WTC11 (cell line): ENCODE measurements at regions of chr3 and their contacts with region 1.

Region 1: GRCh38 chr3:142828703-142829305 is 60.1 kb downstream of the PCOLCE2 start:
- DNase-seq: peak; percentile 88
- ATAC-seq: peak; percentile 98
- H3K4me3 Mint-ChIP-seq: no peak overlapping the region
- H3K27ac Mint-ChIP-seq: no peak overlapping the region
- H3K4me1 Mint-ChIP-seq: no peaks in the 10 kb centered on the region
- H3K27me3 Mint-ChIP-seq: no peaks in the 10 kb centered on the region
- CTCF ChIP-seq: peak; percentile 73

Region 2: DNA sequence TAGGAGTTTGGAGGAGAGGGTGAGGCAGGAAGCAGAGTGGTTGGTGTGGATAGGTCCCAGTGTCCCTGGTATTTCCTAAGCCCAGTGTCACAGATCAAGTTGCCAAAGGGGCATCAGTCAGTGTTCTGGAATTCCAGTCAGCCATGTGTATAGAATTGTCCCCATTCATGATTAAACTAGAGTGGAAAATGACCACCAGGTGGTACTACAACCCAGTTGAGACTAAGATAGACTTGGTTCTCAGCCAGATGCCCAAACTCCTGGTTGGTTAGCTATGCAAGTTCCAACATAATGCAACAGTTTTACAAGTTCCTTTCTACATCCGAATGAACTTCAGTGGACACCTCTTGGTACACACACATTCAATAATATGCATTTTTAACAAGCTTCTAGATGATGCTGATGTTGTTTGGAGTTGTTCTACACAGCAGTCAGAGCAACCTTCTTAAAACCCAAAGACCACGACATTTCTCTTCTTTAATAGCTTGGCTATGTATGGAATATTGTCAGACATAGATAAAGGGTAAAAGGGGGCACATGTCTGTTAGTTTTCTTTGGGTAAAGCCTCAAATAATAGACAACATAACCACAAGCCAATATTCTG is 241.9 kb before region 1 on chr3:
- CTCF ChIA-PET with region 1: interaction called, 11 read pairs
- POLR2A ChIA-PET with region 1: no interaction called
- DNase-seq: no peak
- ATAC-seq: peak; percentile 96
- H3K4me3 Mint-ChIP-seq: no peak overlapping the region
- H3K27ac Mint-ChIP-seq: no peak overlapping the region
- H3K4me1 Mint-ChIP-seq: no peaks in the 10 kb centered on the region
- H3K27me3 Mint-ChIP-seq: no peaks in the 10 kb centered on the region
- CTCF ChIP-seq: peak; percentile 46; the same call in 1 of the 2 replicates

Region 3: DNA sequence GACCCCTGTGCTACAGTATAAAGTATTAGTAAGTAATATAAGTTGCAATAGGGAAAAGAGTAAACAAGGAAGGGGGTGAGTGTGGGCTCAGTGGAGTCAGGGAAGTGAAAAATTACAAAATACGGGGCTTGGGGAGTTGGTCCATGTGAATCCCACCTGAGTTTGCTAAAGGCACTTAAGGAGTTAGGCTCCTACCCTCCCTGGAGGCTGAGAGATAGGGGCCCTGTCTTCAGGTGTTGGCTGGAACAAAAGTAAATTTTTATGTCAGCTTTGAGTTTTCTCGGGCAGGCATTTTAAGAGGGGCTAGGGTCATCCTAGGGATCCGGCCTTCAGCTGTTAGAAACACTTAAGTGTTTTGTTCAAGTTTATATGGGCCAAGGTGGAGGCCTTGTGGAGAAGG is 96.7 kb before region 1 on chr3:
- CTCF ChIA-PET with region 1: no interaction called
- POLR2A ChIA-PET with region 1: no interaction called
- DNase-seq: no peak
- ATAC-seq: peak; percentile 58
- H3K4me3 Mint-ChIP-seq: no peak overlapping the region
- H3K27ac Mint-ChIP-seq: peak overlapping the region; percentile 29; the same call in 1 of the 2 replicates
- H3K4me1 Mint-ChIP-seq: peaks cover 18% of the 10 kb centered on the region
- H3K27me3 Mint-ChIP-seq: no peaks in the 10 kb centered on the region
- CTCF ChIP-seq: no peak

Region 4: DNA sequence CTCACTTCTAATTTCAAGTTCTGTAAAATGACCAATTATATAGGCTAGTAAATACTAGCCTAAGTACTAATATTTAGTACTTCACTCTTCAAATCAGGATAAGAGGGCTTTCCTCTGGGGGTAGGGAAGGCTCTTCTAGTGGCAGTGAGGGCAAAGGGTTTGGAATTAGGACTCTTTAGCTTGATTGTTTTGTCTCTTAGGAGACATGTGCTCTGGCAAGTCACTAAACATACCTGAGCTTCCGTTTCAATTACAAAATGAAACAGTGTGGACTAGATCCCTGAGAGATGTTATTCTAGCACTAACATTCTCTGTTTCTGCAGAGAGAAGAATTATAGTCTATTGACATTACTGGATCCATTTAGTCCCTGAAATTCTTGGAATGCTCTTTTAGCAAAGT is 11.4 kb before region 1 on chr3:
- CTCF ChIA-PET with region 1: interaction called, 10 read pairs
- POLR2A ChIA-PET with region 1: no interaction called
- DNase-seq: no peak
- ATAC-seq: no peak
- H3K4me3 Mint-ChIP-seq: no peak overlapping the region
- H3K27ac Mint-ChIP-seq: no peak overlapping the region
- H3K4me1 Mint-ChIP-seq: no peaks in the 10 kb centered on the region
- H3K27me3 Mint-ChIP-seq: no peaks in the 10 kb centered on the region; the same call in 1 of the 2 replicates
- CTCF ChIP-seq: no peak

Region 5: DNA sequence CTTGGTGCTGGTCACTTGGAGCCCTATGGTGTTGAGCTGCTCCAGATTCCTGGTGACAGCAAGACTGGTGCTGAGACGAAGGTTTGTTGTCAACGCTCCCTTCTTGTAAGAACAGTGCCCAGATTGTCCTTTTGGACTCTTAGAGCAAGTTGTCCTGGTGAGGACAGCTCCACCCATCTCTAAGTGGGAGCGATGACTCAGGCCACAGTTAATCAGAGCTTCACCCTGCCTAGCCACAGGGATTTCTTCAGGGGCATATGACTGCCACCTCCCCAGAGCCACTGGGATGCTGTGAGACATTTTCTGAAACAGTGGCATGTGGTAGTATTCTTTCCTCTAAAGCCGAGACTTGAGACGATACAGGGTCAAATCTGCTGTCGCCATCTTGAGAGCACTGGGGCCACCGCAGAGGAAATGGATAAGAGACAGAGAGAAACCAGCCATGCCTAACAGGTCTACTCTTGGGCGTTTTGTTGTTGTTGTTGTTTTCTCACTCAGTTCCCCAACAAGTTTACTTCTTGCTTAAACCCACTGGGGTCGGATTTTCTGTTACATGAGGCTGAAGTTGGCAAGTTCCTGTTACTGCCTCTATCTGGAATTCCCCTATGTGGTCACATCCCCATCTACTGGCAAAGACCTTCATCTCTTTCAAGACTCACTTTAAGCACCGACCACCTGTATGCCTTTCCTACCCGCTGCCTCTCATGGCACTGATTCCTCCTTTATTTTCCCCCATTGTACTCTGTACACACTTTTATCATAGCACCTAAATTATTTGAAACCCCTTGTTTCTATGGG is 76.0 kb after region 1 on chr3:
- CTCF ChIA-PET with region 1: interaction called, 69 read pairs
- POLR2A ChIA-PET with region 1: no interaction called
- DNase-seq: peak; percentile 14
- ATAC-seq: peak; percentile 96
- H3K4me3 Mint-ChIP-seq: no peak overlapping the region
- H3K27ac Mint-ChIP-seq: no peak overlapping the region
- H3K4me1 Mint-ChIP-seq: no peaks in the 10 kb centered on the region
- H3K27me3 Mint-ChIP-seq: no peaks in the 10 kb centered on the region
- CTCF ChIP-seq: no peak

Region 6: GRCh38 chr3:142929109-142929508 is 100.3 kb after region 1 on chr3:
- CTCF ChIA-PET with region 1: interaction called, 15 read pairs
- POLR2A ChIA-PET with region 1: no interaction called
- DNase-seq: peak; percentile 71
- ATAC-seq: peak; percentile 72
- H3K4me3 Mint-ChIP-seq: no peak overlapping the region
- H3K27ac Mint-ChIP-seq: no peak overlapping the region
- H3K4me1 Mint-ChIP-seq: peaks cover 8% of the 10 kb centered on the region
- H3K27me3 Mint-ChIP-seq: no peaks in the 10 kb centered on the region
- CTCF ChIP-seq: peak; percentile 53

Region 7: DNA sequence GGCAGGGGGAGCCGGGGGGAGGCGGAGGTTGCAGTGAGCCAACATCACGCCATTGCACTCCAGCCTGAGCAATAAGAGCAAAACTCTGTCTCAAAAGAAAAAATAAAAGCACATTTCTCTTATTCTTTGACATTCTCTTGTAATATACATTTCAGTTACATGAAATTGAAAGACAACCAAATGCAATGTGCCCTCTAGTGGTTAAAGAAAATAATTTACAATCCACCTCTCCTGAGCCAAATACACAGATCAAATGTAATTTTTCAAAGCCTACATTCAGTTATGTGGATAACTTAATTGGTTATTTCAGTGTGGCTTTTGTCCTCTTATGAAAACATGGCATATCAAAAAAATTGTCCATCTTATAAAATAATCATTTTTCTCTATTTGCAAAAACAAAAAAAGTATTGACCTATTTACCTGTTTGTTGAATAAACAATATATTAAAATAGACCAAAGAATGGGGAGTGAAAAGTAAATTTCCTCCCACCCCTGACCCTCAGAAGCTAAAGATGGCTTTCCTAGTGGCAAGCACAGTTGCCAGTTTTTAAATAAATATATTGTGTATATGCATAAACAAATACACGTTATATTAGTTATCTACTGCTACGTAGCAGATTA is 158.4 kb after region 1 on chr3:
- CTCF ChIA-PET with region 1: interaction called, 26 read pairs
- POLR2A ChIA-PET with region 1: no interaction called
- DNase-seq: no peak
- ATAC-seq: no peak
- H3K4me3 Mint-ChIP-seq: no peak overlapping the region
- H3K27ac Mint-ChIP-seq: no peak overlapping the region
- H3K4me1 Mint-ChIP-seq: peaks cover 11% of the 10 kb centered on the region
- H3K27me3 Mint-ChIP-seq: no peaks in the 10 kb centered on the region
- CTCF ChIP-seq: peak; percentile 67

Region 8: GRCh38 chr3:143001369-143002082 is 172.7 kb after region 1 on chr3 and contains the start of gene U2SURP:
- CTCF ChIA-PET with region 1: interaction called, 12 read pairs
- POLR2A ChIA-PET with region 1: no interaction called
- DNase-seq: peak; percentile 95
- ATAC-seq: peak; percentile 85
- H3K4me3 Mint-ChIP-seq: peak within 1 kb of the TSS; percentile 96
- H3K27ac Mint-ChIP-seq: peak within 1 kb of the TSS; percentile 98
- H3K4me1 Mint-ChIP-seq: peaks cover 34% of the 10 kb centered on the region
- H3K27me3 Mint-ChIP-seq: no peaks in the 10 kb centered on the region
- CTCF ChIP-seq: no peak
- total RNA-seq, gene U2SURP: 111 to 133 TPM (median 117 TPM) in 3 replicates